ENCODE measurements at regions of chr13 and their contacts with region 1.

Region 1: DNA sequence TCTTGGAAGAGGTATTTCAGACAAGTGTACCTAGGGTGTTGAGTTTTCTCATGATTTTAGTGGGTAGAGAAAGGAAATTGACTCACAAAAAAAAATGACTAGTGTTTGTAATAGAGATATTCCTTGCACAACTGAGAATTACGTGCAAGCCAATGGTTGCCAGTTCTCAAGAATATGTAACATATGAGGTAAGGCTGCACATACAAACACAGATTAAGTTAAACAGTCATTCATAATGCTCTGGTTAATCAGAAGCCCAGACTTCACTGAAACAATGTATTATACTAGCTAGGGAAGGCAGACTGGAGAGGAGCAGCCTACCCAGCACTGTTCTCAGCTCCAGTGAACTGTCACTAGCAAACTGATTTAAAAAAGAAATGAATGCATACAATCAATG is 418.3 kb downstream of the DIAPH3 start:
- DNase-seq: no peak
- H3K4me3 ChIP-seq: no peak overlapping the region
- H3K27ac ChIP-seq: no peak overlapping the region
- H3K4me1 ChIP-seq: no peaks in the 10 kb centered on the region
- CTCF ChIP-seq: no peak

Region 2: DNA sequence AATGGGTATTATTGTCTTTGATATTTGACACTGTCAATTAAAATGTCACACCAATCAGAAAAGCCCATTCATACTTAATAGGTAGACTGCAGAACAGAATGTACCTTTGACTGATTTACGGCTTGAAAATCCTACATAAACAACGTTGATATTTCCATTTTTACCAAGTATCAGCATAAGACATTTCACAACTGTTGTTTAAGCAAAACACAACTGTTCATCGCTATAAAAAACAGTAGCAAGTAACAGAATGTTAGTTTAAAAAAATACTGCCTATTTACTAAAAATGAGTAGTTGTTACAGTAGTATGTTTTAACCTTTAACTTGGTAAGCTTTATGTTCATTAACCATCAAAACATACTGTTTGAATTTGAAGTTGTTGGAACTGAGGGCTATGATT is 1017.3 kb before region 1 on chr13:
- CTCF ChIA-PET with region 1: no interaction called
- POLR2A ChIA-PET with region 1: no interaction called
- intact Hi-C with region 1: no loop called
- DNase-seq: no peak
- H3K4me3 ChIP-seq: no peak overlapping the region
- H3K27ac ChIP-seq: no peak overlapping the region
- H3K4me1 ChIP-seq: no peaks in the 10 kb centered on the region
- CTCF ChIP-seq: no peak

Region 3: DNA sequence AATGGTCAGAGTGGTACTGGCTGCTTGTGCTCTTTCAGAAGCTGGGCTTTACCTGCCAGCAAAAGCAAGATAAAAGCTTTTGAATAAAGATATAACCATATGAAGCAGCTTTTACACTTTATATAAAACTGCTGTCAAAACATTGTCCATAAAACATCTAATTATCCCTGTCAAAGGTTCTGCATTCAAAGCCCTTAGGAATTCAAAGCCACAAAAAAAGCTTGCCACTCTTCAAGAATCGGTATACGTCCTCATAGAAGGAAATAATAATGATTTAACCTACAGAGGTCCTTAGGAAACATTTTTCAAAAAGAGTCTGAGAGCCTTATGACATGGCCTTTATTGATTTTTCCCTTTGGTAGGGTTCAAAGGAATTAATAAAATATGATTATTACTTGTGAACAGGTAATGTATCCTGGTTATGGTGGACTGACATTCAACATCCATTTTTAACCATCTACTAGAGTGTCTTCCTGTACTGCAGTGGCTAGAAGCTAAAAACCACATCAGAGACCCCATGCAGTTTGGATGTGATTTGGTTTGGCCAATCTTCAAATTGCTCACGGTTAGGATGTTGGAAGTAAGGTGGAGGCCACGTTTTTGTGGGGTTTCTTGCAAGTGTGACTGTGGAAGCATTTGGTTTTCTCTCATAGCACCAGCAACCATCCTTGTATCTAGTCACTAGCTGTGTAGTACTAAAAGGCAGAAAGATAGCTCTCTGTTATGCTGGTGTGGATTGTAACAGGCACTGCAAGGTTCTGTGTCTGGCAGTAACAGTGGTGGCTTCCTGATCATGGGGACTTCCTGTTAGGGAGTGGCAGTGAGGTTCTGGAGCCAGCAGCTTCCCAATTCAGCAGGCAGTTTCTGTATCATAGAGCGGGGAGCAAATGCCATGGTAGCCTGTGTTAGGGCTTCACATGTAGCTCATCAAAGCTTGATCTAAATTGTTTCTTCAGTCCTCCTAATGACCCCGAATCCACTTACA is 23.2 kb before region 1 on chr13:
- CTCF ChIA-PET with region 1: no interaction called
- POLR2A ChIA-PET with region 1: no interaction called
- intact Hi-C with region 1: loop called (anchors 2 kb)
- DNase-seq: no peak
- H3K4me3 ChIP-seq: no peak overlapping the region
- H3K27ac ChIP-seq: no peak overlapping the region
- H3K4me1 ChIP-seq: no peaks in the 10 kb centered on the region
- CTCF ChIP-seq: no peak

Region 4: DNA sequence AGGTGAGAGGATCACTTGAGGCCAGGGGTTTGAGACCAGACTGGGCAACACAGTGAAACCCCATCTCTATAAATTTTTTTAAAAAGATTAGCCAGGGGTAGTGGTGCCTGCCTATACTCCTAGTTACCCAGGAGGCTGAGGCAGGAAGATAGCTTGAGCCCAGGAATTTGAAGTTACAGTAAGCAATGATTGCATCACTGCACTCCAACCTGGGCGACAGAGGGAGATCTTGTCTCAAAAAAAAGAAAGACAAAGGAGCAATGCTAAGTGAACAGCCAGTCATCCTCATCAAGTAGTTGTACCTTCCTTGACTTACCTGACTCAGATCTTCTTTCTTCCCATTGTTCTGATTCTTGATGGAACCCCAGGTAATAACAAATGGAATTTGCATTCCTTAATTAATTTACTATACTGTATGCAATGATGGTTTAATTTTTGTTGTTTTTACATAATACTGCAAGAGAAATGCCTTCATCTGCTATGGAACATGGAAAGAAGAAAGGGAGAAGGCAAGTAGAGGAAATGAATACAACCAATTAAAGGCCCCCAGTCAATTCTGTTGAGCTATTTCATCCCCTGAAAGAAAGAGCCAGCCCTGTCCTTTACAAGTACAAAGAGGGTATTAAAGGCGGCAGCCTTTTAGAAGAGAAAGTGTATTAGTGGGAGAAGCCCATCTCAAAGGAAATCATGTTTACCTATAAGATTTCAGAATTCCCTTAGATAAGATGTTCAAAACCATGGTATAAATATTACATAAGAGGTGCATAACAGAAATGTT is 101.6 kb after region 1 on chr13:
- CTCF ChIA-PET with region 1: no interaction called
- POLR2A ChIA-PET with region 1: no interaction called
- intact Hi-C with region 1: no loop called
- DNase-seq: no peak
- H3K4me3 ChIP-seq: no peak overlapping the region
- H3K27ac ChIP-seq: no peak overlapping the region
- H3K4me1 ChIP-seq: no peaks in the 10 kb centered on the region
- CTCF ChIP-seq: no peak

Region 5: DNA sequence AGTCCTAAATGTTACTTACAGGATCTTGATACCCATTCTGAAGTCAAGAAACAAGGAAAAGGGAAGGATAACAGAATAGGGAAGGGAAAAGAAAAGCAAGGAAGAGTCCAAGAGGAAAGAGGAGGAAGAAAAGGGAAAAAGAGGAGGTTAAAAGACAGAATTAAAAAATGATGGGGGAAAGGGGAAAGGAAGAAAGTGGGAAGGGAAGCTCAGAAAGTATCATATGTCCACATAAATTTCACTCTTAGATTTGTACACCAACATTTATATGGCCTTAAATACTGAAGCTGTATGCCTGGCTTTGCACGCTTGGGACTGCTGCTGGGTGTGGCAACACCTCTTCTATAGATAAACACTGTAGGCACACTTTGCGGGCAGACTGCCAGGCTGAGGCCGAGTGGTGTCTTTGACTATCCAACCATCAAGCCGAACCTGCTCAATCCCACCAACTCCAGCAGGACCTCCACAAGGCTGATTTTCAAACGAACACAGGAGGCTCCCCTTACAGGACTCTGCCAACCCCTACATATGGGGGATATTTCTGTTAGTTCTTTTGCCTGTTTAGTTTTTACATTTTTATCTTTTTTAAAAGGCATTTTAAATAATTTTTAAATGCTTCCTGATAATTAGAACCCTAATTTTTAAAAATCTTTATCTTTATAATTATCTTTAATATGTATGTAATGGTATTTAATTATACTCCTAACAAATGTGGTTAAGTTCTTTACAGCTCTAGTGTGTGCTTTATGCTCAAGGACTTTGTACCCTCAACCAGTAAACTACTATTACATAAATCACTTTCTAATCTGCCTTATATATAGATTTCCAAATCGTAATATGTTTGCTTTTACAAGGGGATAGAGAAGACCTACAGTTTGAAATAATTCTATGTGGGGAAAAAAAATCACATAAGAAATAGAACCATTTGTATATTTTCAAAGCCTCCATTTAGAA is 264.2 kb after region 1 on chr13:
- CTCF ChIA-PET with region 1: no interaction called
- POLR2A ChIA-PET with region 1: no interaction called
- intact Hi-C with region 1: no loop called
- DNase-seq: no peak
- H3K4me3 ChIP-seq: no peak overlapping the region
- H3K27ac ChIP-seq: no peak overlapping the region
- H3K4me1 ChIP-seq: no peaks in the 10 kb centered on the region
- CTCF ChIP-seq: no peak